H1 (cell line): ENCODE measurements at regions of chr10 and their contacts with region 1.

Region 1: GRCh38 chr10:44310762-44311562 is 73.9 kb downstream of the CXCL12 start:
- DNase-seq: peak; percentile 58 to 94
- H3K4me3 ChIP-seq: peak overlapping the region in 2 of 4 experiments; percentile 15 to 49; a peak in 5 of 8 replicates
- H3K27ac ChIP-seq: no peak overlapping the region
- H3K4me1 ChIP-seq: peaks cover 0 to 10% (median 6%) of the 10 kb centered on the region in 4 experiments; a peak in 6 of 7 replicates
- H3K27me3 ChIP-seq: peaks cover 0 to 25% (median 19%) of the 10 kb centered on the region in 4 experiments; a peak in 6 of 7 replicates
- CTCF ChIP-seq: peak; percentile 93 to 96 (median 93)
- EP300 ChIP-seq: 0 out of 3 replicates have a peak, but pooled peaks of 1 of the 2 experiments have one; percentile 59
- POLR2A ChIP-seq: peak in 1 of 2 experiments; percentile 42; a peak in 1 of 3 replicates
- RAD21 ChIP-seq: peak; percentile 77 to 86

Region 2: DNA sequence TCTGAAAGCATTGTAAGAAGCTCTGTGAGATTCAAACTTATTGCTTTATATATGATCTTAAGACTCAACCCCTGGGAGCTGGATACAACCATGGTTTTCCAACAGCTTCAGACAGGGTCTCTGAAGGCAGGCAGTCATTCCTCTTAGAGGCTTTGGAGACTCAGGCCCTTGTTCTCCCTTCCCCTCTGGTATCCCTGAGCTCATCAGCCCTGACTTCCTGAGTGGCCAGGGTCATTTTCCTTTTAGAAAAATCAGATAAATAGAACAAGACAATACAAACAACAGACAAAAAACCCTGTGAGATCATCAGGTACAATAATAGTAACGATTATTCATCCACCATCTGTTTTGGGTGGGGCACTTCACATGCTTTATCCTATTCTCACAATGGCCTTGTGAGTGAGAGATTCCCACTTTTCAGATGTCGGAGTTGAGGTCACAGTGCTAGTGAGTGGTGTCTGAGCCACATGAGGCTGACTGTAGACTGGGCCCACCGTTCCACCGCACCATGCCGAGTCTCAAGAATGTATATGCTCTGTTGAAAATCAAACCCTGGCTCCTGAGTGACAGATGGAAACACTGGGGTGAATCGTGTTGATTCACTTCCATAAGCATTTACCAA is 70.3 kb before region 1 on chr10:
- CTCF ChIA-PET with region 1: no interaction called
- POLR2A ChIA-PET with region 1: no interaction called
- DNase-seq: no peak
- H3K4me3 ChIP-seq: no peak overlapping the region
- H3K27ac ChIP-seq: no peak overlapping the region
- H3K4me1 ChIP-seq: no peaks in the 10 kb centered on the region
- H3K27me3 ChIP-seq: peaks cover 0 to 2% (median 0%) of the 10 kb centered on the region in 4 experiments; a peak in 3 of 7 replicates
- CTCF ChIP-seq: no peak
- EP300 ChIP-seq: no peak
- POLR2A ChIP-seq: no peak
- RAD21 ChIP-seq: no peak

Region 3: GRCh38 chr10:44300666-44301649 is 10.0 kb before region 1 on chr10:
- CTCF ChIA-PET with region 1: interaction called, 10 read pairs
- POLR2A ChIA-PET with region 1: no interaction called
- DNase-seq: no peak
- H3K4me3 ChIP-seq: no peak overlapping the region
- H3K27ac ChIP-seq: no peak overlapping the region
- H3K4me1 ChIP-seq: peaks cover 0 to 9% (median 4%) of the 10 kb centered on the region in 4 experiments; a peak in 4 of 7 replicates
- H3K27me3 ChIP-seq: no peaks in the 10 kb centered on the region
- CTCF ChIP-seq: no peak
- EP300 ChIP-seq: no peak
- POLR2A ChIP-seq: no peak
- RAD21 ChIP-seq: no peak

Region 4: DNA sequence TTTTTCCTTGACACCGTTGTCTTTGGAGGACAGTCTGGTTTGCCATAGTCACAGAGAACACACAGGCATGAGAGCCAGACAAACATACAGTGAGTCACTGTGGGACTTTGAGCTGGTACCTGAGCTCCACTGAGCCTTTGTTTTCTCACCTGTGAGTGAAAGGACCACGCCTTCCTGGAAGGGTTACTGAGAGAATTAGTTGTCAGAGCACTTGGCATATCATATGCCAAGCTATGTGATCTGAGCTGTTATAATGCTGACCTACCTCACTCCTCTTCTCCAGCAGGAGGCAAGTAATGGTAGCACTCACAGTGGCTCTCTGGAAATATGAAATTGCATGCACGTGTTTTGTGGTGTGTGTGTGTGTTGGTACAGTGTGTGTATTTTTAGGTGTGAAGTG is 14.2 kb after region 1 on chr10:
- CTCF ChIA-PET with region 1: interaction called, 11 read pairs
- POLR2A ChIA-PET with region 1: no interaction called
- DNase-seq: peak in 1 of 2 experiments; percentile 14
- H3K4me3 ChIP-seq: no peak overlapping the region
- H3K27ac ChIP-seq: no peak overlapping the region
- H3K4me1 ChIP-seq: no peaks in the 10 kb centered on the region
- H3K27me3 ChIP-seq: no peaks in the 10 kb centered on the region
- CTCF ChIP-seq: no peak
- EP300 ChIP-seq: no peak
- POLR2A ChIP-seq: no peak
- RAD21 ChIP-seq: no peak